Posterior cingulate gyrus (tissue), 11 donors: ENCODE measurements at regions of chr2 and their contacts with region 1.

Region 1: GRCh38 chr2:71545572-71546274 is 92.4 kb downstream of the DYSF start:
- DNase-seq: peak in 7 of 10 donors; percentile 52 to 92 (median 64)

Region 2: GRCh38 chr2:71460595-71461303 is 85.0 kb before region 1 on chr2:
- intact Hi-C with region 1: no loop called
- DNase-seq: no peak

Region 3: GRCh38 chr2:71596011-71596410 is 50.3 kb after region 1 on chr2:
- intact Hi-C with region 1: loop called (anchors 2 kb)
- DNase-seq: peak; percentile 80 to 99 (median 92)

Region 4: DNA sequence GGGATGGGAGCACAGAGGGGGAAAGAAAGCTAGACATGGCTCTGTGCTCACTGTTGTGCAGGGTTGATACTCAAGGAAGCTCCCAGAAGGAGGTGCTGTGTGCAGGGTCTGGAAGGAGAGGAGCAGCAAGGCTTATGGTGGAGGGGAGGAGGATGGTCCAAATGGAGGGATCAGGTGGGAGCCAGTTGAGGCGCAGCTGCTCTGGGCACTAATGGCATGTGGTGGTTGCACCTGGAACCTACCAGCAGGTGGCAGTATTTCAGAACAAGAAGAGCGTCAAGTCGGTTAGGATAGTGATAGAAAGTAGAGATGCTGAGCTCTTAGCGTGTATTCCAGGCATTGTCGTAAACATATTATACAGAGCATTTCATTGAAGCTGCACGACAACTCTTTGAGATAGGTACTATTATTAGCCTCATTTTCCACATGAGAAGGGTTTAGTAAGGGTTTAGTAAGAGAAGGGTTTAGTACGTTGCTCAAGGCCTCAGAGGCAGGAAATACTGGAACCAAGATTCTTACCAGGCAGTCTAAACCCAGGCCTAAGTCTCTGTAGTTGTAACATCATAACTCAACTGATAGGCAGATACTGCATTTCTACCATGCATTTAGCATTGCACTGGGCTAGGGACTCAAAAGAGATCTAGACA is 378.3 kb after region 1 on chr2:
- intact Hi-C with region 1: loop called (anchors 2 kb)
- DNase-seq: peak in 7 of 10 donors; percentile 52 to 92 (median 69)

Region 5: GRCh38 chr2:72579591-72580180 is 1034.0 kb after region 1 on chr2:
- intact Hi-C with region 1: loop called (anchors 10 kb)
- DNase-seq: no peak

Region 6: DNA sequence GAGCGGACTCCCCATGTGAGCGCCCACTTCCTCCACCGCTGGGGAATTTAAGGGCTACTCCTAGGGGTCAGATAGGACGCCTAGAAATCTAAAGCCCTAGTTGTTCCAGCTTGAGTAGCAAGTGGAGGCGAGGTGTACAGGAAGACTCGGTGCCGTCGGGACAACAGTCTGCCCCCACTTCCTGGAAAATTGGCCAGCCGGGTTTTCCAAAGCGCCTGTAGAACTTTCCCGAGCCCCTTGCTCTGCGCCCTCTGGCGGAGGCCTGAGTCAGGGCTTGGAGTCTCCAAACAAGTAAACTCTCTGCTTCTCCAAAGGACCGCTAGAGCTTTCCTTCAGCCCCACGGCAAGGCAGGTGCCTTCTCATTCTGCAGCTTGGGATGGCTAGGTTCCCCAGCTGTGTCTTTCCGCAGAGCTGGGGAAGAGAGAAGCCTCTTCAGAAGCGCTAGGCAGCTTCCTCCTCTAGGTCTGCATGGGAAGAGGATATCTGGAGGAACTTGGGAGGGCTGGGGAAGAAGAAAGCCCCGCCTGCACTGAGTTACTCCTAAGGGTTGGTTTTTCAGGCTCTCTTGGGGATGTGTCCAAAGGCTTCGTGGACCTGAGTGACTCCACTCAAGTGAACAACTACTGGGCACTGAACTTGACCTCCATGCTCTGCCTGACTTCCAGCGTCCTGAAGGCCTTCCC is 1342.2 kb after region 1 on chr2:
- intact Hi-C with region 1: loop called (anchors 10 kb)
- DNase-seq: peak; percentile 73 to 98 (median 88)